A549 (cell line): ENCODE measurements at regions of chr1 and their contacts with region 1.

Region 1: DNA sequence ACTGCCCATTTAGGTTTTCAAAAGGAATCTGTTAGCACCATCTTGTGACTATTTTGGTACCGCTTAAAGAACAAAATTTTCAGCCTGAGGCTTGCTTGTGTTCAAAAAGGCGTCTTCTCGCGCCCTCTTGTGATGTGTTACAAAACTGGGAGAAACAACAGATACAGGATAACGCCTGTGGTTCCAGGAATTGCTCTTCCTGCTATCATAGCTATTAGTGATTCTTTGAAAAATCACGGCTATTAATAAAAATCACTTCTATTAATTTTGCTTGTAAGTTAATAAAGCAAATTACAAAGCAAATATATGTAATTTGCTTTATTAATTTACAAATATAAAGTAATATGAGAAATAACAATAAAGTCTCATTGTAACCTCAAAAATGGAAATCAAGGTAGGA is 82.2 kb upstream of the ABCD3 start:
- DNase-seq: peak; percentile 18 to 89
- ATAC-seq: peak; percentile 89 to 94
- H3K4me3 ChIP-seq: no peak overlapping the region
- H3K27ac ChIP-seq: peak overlapping the region; percentile 38 to 55; a peak in 2 of 6 replicates
- H3K4me1 ChIP-seq: peaks cover 22% of the 10 kb centered on the region
- CTCF ChIP-seq: peak; percentile 99
- EP300 ChIP-seq: no peak
- POLR2A ChIP-seq: no peak
- RAD21 ChIP-seq: peak; percentile 99

Region 2: DNA sequence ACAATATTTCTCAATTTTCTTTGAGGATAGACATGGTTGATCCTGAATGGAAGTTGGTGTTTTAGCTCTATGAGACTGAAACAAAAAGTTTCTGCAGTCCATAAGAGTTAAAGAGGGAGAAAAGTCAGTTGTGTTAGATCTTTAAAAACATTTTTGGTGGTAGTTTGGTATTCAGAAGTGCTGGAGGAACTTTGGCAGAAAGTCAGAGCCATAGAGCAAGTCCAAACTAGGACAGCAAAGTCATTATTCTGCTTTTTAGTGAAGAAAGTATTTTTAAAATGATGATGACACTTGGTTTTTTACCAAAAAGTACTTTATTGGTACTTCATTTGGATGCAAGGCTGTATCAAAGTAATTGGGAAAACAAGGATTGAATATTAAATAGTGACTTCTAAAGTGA is 846.2 kb before region 1 on chr1:
- CTCF ChIA-PET with region 1: no interaction called
- POLR2A ChIA-PET with region 1: no interaction called
- DNase-seq: no peak
- ATAC-seq: no peak
- H3K4me3 ChIP-seq: no peak overlapping the region
- H3K27ac ChIP-seq: no peak overlapping the region
- H3K4me1 ChIP-seq: no peaks in the 10 kb centered on the region
- CTCF ChIP-seq: no peak
- EP300 ChIP-seq: no peak
- POLR2A ChIP-seq: no peak
- RAD21 ChIP-seq: no peak

Region 3: GRCh38 chr1:94004924-94005323 is 331.0 kb before region 1 on chr1:
- CTCF ChIA-PET with region 1: no interaction called
- POLR2A ChIA-PET with region 1: no interaction called
- DNase-seq: no peak
- ATAC-seq: no peak
- H3K4me3 ChIP-seq: no peak overlapping the region
- H3K27ac ChIP-seq: no peak overlapping the region
- H3K4me1 ChIP-seq: 0 out of 3 replicates have a peak, but pooled peaks cover 3% of the 10 kb centered on the region
- CTCF ChIP-seq: no peak
- EP300 ChIP-seq: no peak
- POLR2A ChIP-seq: no peak
- RAD21 ChIP-seq: no peak

Region 4: GRCh38 chr1:94055459-94056122 is 280.4 kb before region 1 on chr1:
- CTCF ChIA-PET with region 1: interaction called, 840 read pairs
- POLR2A ChIA-PET with region 1: no interaction called
- DNase-seq: no peak
- ATAC-seq: no peak
- H3K4me3 ChIP-seq: no peak overlapping the region
- H3K27ac ChIP-seq: no peak overlapping the region
- H3K4me1 ChIP-seq: peaks cover 10% of the 10 kb centered on the region
- CTCF ChIP-seq: no peak
- EP300 ChIP-seq: no peak
- POLR2A ChIP-seq: no peak
- RAD21 ChIP-seq: no peak

Region 5: DNA sequence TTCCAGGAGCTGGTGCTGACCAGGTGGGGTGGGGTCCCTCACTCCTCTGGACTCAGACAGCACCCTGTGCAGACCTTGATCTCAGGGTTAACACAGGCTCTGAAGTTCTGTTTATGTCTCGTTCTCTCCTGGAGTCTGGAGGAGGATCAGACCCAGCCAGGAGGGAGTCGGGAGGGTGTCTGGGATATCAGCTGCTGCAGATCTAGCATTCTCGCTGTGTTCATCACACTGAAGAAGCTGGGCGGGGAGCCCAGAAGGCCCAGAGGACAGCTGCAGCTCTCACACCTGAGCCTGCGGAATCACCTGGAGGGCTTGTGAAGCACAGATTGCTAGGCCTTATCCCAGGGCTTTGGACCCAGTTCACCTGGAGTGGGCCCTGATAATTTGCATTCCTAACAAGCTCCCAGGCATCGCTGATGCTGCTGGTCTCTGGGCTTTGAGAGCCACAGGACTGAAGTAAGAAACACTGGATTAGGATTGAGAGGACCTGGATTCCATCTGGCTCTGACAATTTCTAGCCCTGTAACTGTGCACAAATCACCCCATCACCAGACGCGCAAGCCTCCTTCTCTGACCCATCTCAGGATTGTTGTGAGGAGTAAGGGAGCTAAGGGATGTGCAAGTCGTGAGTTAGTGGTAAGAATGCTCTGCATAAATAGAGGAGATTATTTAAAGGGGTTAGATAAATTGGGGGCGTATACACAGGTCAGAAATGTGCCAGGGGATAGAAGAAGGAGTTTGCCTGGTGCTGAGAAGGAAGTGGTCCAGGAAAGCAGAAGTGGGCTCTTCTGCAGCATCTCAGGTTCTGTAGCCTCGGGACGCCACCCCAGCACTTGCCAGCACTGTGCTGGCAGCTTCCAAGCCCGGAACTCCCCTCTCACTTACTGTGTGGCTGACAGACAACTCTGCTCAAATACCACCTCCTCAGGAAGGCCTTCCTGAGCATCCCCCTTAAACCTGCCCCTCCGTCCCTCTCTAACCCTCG is 234.1 kb before region 1 on chr1:
- CTCF ChIA-PET with region 1: interaction called, 11 read pairs
- POLR2A ChIA-PET with region 1: no interaction called
- DNase-seq: no peak
- ATAC-seq: no peak
- H3K4me3 ChIP-seq: no peak overlapping the region
- H3K27ac ChIP-seq: no peak overlapping the region
- H3K4me1 ChIP-seq: peaks cover 11% of the 10 kb centered on the region; the same call in 2 of the 3 replicates
- CTCF ChIP-seq: no peak
- EP300 ChIP-seq: no peak
- POLR2A ChIP-seq: no peak
- RAD21 ChIP-seq: no peak

Region 6: GRCh38 chr1:94237291-94238226 is 98.4 kb before region 1 on chr1 and contains the start of gene ARHGAP29:
- CTCF ChIA-PET with region 1: interaction called, 34 read pairs
- POLR2A ChIA-PET with region 1: interaction called, 3 read pairs
- DNase-seq: peak; percentile 48 to 79
- ATAC-seq: peak; percentile 92 to 93
- H3K4me3 ChIP-seq: peak within 1 kb of the TSS; percentile 84
- H3K27ac ChIP-seq: peak within 1 kb of the TSS; percentile 88 to 97
- H3K4me1 ChIP-seq: peaks cover 48% of the 10 kb centered on the region
- CTCF ChIP-seq: no peak
- EP300 ChIP-seq: no peak
- POLR2A ChIP-seq: peak; percentile 81
- RAD21 ChIP-seq: peak in 1 of 2 experiments; percentile 9; a peak in 1 of 5 replicates
- polyA plus RNA-seq, gene ARHGAP29: 22.0 and 29.7 TPM in 2 replicates

Region 7: DNA sequence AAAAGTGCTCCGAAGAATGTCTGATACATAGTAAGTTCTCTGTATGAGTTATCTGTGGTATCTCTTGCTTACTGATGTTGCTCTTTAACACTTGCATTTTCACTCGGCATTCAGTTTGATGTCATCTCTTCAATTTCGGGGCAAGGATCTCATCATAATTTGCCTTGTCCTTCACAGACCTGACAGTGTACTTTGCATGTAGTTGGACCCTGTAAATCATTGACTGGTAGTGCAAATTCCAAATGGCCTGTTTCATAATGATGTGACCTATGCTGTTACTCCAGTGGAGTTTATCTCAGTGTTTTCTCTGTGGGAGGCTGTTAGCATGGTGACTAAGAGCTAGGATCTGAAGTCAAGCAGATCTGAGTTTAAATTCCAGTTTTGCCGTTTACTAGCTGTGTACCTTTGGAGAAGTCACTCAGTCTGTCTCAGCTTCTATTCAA is 48.0 kb after region 1 on chr1:
- CTCF ChIA-PET with region 1: interaction called, 13 read pairs
- POLR2A ChIA-PET with region 1: no interaction called
- DNase-seq: peak; percentile 66 to 93
- ATAC-seq: peak; percentile 98
- H3K4me3 ChIP-seq: no peak overlapping the region
- H3K27ac ChIP-seq: peak overlapping the region; percentile 96 to 97
- H3K4me1 ChIP-seq: peaks cover 33% of the 10 kb centered on the region
- CTCF ChIP-seq: no peak
- EP300 ChIP-seq: peak; percentile 49 to 61; a peak in 2 of 5 replicates
- POLR2A ChIP-seq: no peak
- RAD21 ChIP-seq: 0 out of 5 replicates have a peak, but pooled peaks have one; percentile 20 to 32